H1 (cell line): ENCODE measurements at regions of chr13 and their contacts with region 1.

Region 1: DNA sequence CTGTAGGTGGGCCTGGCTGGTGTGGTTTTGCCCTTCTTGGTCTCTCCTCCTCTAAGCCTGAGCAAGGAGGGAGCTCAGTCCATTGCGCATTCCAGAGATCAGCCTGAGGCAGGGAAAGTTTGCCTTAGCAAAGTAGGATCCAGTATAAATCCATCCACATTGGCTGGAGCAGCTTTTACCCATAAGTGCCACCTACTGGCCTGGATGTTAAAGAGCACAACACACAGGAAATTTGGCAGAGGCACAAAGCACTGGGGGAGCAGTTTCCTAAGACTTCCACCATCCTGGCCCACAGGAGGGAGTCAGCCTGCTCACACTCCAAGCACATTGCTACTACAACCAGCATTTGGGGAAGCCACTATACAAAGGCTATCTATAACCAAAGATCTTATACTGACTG is 1124.2 kb downstream of the SLITRK1 start:
- DNase-seq: peak; percentile 53 to 77
- H3K4me3 ChIP-seq: no peak overlapping the region
- H3K27ac ChIP-seq: no peak overlapping the region
- H3K4me1 ChIP-seq: no peaks in the 10 kb centered on the region
- H3K27me3 ChIP-seq: no peaks in the 10 kb centered on the region
- CTCF ChIP-seq: peak; percentile 46 to 89 (median 86)
- EP300 ChIP-seq: no peak
- POLR2A ChIP-seq: no peak
- RAD21 ChIP-seq: peak; percentile 70 to 80

Region 2: GRCh38 chr13:82593239-82593638 is 164.8 kb before region 1 on chr13:
- CTCF ChIA-PET with region 1: no interaction called
- POLR2A ChIA-PET with region 1: no interaction called
- DNase-seq: no peak
- H3K4me3 ChIP-seq: no peak overlapping the region
- H3K27ac ChIP-seq: no peak overlapping the region
- H3K4me1 ChIP-seq: no peaks in the 10 kb centered on the region
- H3K27me3 ChIP-seq: peaks cover 12 to 49% (median 33%) of the 10 kb centered on the region in 4 experiments
- CTCF ChIP-seq: no peak
- EP300 ChIP-seq: no peak
- POLR2A ChIP-seq: no peak
- RAD21 ChIP-seq: no peak

Region 3: GRCh38 chr13:82661126-82661525 is 96.9 kb before region 1 on chr13:
- CTCF ChIA-PET with region 1: no interaction called
- POLR2A ChIA-PET with region 1: no interaction called
- DNase-seq: no peak
- H3K4me3 ChIP-seq: no peak overlapping the region
- H3K27ac ChIP-seq: no peak overlapping the region
- H3K4me1 ChIP-seq: no peaks in the 10 kb centered on the region
- H3K27me3 ChIP-seq: no peaks in the 10 kb centered on the region
- CTCF ChIP-seq: no peak
- EP300 ChIP-seq: no peak
- POLR2A ChIP-seq: no peak
- RAD21 ChIP-seq: no peak

Region 4: GRCh38 chr13:82739881-82740280 is 18.2 kb before region 1 on chr13:
- CTCF ChIA-PET with region 1: interaction called, 18 read pairs
- POLR2A ChIA-PET with region 1: no interaction called
- DNase-seq: no peak
- H3K4me3 ChIP-seq: no peak overlapping the region
- H3K27ac ChIP-seq: no peak overlapping the region
- H3K4me1 ChIP-seq: no peaks in the 10 kb centered on the region
- H3K27me3 ChIP-seq: no peaks in the 10 kb centered on the region
- CTCF ChIP-seq: peak in 1 of 3 experiments; percentile 38; a peak in 1 of 4 replicates
- EP300 ChIP-seq: no peak
- POLR2A ChIP-seq: no peak
- RAD21 ChIP-seq: peak; percentile 35 to 54

Region 5: DNA sequence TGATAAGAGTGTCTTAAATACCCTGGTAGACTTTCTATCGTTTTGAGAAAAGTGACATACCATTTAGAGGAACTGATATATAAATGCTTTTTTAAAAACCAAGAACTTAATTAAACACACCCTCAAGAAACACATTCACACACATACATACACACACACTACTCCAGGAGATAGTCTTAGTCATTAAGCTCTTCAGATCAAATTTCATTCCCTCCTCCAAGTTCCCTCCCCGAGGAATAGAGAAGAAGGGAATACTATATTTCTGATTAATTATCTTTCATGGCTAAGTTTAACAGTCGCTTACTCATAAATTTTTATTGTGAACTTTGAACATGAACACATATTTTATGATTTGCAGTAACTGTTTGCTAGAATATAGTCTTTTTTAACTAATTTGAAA is 14.8 kb after region 1 on chr13:
- CTCF ChIA-PET with region 1: interaction called, 10 read pairs
- POLR2A ChIA-PET with region 1: no interaction called
- DNase-seq: no peak
- H3K4me3 ChIP-seq: no peak overlapping the region
- H3K27ac ChIP-seq: no peak overlapping the region
- H3K4me1 ChIP-seq: no peaks in the 10 kb centered on the region
- H3K27me3 ChIP-seq: no peaks in the 10 kb centered on the region
- CTCF ChIP-seq: no peak
- EP300 ChIP-seq: no peak
- POLR2A ChIP-seq: no peak
- RAD21 ChIP-seq: no peak